Right cardiac atrium (tissue), 5 donors: ENCODE measurements at regions of chr5 and their contacts with region 1.

Region 1: DNA sequence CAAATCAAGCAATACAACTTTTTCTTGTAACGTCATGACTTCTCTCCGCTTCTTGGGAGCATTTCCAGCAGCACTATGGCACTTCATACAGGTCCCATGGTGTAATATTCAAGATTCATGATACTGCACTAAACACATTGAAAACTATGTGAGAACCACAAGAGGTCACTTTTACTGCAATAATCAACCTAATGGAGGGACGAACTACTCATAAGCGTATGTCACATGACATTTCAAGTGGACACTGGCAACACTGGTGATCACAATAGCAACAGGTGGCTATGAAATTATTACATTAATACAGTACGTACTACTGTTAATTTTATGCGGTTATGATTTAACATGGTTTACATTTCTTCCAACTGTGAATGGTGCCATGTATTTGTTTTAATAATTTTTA is 78.6 kb upstream of the TBC1D9B start:
- DNase-seq: no peak
- ATAC-seq: peak; percentile 71 to 79
- H3K4me3 ChIP-seq: no peak overlapping the region
- H3K27ac ChIP-seq: no peak overlapping the region
- H3K4me1 ChIP-seq: no peaks in the 10 kb centered on the region
- H3K27me3 ChIP-seq: no peaks in the 10 kb centered on the region

Region 2: DNA sequence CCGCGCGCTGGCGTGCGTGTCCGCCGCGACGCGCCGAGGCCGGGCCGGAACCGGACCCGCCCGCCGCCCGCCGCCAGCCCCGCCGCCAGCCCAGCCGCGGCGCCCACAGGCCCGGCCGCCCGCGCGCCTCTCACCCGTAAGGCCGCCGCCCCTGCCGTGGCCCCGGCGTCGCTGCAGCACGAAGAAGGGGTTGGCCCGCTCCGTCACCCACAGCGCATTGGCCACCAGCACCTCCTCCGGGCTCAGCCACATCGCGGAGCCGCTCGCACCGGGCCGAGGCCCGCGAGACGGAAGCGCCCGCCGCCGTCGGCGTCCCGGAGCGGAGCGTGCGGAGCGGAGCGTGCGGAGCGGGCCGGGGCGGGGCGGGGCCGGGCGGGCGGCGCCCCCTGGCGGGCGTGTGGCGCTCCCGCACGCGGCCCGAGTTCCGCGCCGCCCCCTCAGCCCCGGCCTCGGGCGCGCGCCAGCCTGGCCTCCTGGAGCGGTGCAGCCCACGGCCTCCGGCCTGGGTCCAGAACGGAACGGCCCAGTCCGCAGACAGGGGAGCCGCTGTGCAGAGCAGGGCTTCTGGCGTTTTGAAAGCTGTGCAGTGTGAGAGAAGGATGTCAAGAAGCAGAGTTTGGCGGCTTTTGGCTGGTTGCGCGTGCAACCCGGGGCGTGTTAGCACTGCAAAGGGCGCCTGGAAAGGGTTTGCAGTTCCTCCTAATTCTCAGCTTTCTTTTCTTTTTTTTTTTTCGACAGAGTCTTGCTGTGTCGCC is 78.6 kb before region 1 on chr5 and contains the start of gene TBC1D9B:
- intact Hi-C with region 1: no loop called
- DNase-seq: peak; percentile 77 to 93 (median 91)
- ATAC-seq: peak; percentile 88 to 91
- H3K4me3 ChIP-seq: peak within 1 kb of the TSS; percentile 95
- H3K27ac ChIP-seq: peak within 1 kb of the TSS; percentile 90
- H3K4me1 ChIP-seq: peaks cover 4% of the 10 kb centered on the region
- H3K27me3 ChIP-seq: no peaks in the 10 kb centered on the region
- total RNA-seq, gene TBC1D9B: 36.2 to 51.5 (median 45.2) TPM

Region 3: GRCh38 chr5:180071531-180072255 is 85.4 kb after region 1 on chr5 and contains the start of gene RNF130:
- intact Hi-C with region 1: loop called in 1 of 4 experiments (anchors 10 kb)
- DNase-seq: peak; percentile 95 to 98 (median 98)
- ATAC-seq: peak; percentile 97 to 98
- H3K4me3 ChIP-seq: peak within 1 kb of the TSS; percentile 83
- H3K27ac ChIP-seq: peak within 1 kb of the TSS; percentile 94
- H3K4me1 ChIP-seq: peaks cover 5% of the 10 kb centered on the region
- H3K27me3 ChIP-seq: no peaks in the 10 kb centered on the region
- total RNA-seq, gene RNF130: 42.7 to 51.6 (median 48.4) TPM

Region 4: DNA sequence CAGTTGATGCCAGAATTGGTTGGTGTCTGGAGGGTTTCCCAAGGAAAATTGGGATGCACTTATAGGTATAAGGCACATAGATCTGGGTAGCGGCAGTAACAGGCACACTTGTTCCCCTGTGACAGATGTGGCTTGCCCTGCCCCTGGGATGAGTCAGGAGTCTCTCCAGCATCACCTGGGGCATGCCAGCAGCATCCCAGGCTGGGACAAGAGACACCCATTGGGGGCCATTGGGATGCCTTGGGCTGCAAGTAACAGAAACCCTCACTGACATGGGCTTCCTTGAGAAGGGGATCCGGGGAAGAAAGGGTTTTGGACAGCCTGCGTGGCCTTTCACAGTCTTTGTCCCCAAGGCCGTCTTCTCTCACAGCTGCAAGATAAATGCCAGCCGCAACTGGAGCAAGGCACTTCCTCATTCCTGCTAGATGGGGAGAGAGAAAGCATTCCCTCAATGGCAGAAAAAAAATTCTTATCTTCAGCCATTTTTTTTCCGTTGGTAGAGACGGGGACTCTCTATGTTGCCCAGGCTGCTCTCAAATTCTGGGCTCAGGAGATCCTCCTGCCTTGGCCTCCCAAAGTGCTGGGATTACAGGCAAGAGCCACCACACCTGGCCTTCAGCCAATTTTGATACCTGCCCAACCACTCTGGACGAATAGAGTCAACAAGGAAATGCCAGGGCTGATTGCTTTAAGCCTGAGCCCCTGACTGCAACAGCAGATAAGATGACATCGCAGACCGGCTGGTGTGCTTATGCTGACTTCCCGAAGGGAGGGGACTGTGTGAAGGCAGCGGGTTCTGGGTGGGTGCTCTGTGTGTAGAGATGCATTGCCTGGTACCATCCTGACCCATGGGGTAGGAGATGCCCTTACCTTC is 98.6 kb after region 1 on chr5:
- intact Hi-C with region 1: loop called in 2 of 4 experiments (anchors 10 kb)
- DNase-seq: no peak
- ATAC-seq: peak in 1 of 2 donors; percentile 34
- H3K4me3 ChIP-seq: no peak overlapping the region
- H3K27ac ChIP-seq: no peak overlapping the region
- H3K4me1 ChIP-seq: no peaks in the 10 kb centered on the region
- H3K27me3 ChIP-seq: no peaks in the 10 kb centered on the region

Region 5: DNA sequence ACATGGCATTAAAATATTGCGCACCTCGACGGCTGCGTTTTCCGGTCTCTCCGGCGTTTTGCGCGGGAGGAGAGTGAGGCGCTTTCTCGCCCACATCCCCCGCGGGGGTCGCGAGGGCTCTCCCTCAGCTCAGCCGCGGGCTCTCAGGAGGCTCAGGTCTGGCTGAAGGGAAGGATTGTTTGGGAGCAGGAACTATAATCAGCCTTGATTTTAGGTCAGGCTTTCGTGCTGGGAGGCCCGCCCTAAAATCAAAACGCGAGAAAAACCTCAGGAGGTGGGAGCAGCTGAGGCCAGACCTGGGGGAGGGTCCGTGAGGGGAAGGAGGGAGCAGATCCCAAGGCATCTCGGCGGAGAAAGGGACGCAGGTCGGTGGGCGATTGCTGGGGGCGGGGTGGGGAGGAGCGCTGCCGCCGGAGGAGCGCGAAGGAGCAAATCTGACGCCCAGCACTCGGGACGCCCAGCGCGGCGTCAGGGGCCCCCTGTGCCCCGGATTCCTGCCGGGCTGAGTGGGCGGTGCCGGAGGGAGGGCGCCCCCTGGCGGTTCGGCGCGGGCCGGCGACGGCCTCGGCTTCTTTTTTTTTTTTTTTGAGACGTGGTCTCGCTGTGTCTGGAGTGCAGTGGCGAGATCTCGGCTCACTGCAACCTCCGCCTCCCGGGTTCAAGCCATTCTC is 103.9 kb after region 1 on chr5:
- intact Hi-C with region 1: loop called in 2 of 4 experiments (anchors 10 kb)
- DNase-seq: peak; percentile 75 to 92 (median 92)
- ATAC-seq: peak; percentile 91 to 94
- H3K4me3 ChIP-seq: peak overlapping the region; percentile 62
- H3K27ac ChIP-seq: peak overlapping the region; percentile 25
- H3K4me1 ChIP-seq: peaks cover 2% of the 10 kb centered on the region
- H3K27me3 ChIP-seq: no peaks in the 10 kb centered on the region